ENCODE measurements at regions of chrX and their contacts with region 1.

Region 1: GRCh38 chrX:26952213-26952612 is 510.9 kb downstream of the PPP4R3C start:
- DNase-seq: no peak
- ATAC-seq: no peak
- H3K4me3 Mint-ChIP-seq: no peak overlapping the region
- H3K27ac Mint-ChIP-seq: no peak overlapping the region
- H3K4me1 Mint-ChIP-seq: no peaks in the 10 kb centered on the region
- H3K27me3 Mint-ChIP-seq: no peaks in the 10 kb centered on the region

Region 2: GRCh38 chrX:26783512-26784225 is 168.5 kb before region 1 on chrX:
- CTCF ChIA-PET with region 1: no interaction called
- POLR2A ChIA-PET with region 1: no interaction called
- intact Hi-C with region 1: no loop called
- DNase-seq: peak; percentile 9
- ATAC-seq: no peak
- H3K4me3 Mint-ChIP-seq: no peak overlapping the region
- H3K27ac Mint-ChIP-seq: no peak overlapping the region
- H3K4me1 Mint-ChIP-seq: no peaks in the 10 kb centered on the region
- H3K27me3 Mint-ChIP-seq: no peaks in the 10 kb centered on the region

Region 3: GRCh38 chrX:27008486-27008885 is 56.3 kb after region 1 on chrX:
- CTCF ChIA-PET with region 1: no interaction called
- POLR2A ChIA-PET with region 1: no interaction called
- intact Hi-C with region 1: loop called in 1 of 2 experiments (anchors 10 kb)
- DNase-seq: no peak
- ATAC-seq: no peak
- H3K4me3 Mint-ChIP-seq: no peak overlapping the region
- H3K27ac Mint-ChIP-seq: no peak overlapping the region
- H3K4me1 Mint-ChIP-seq: no peaks in the 10 kb centered on the region
- H3K27me3 Mint-ChIP-seq: no peaks in the 10 kb centered on the region

Measured in activated CD4-positive, alpha-beta T cell treated with anti-CD3 and anti-CD28 coated beads for 36 hours (primary cell).